ENCODE measurements at regions of chr13 and their contacts with region 1.

Region 1: GRCh38 chr13:113493315-113493951 is 2.9 kb upstream of the DCUN1D2 start:
- DNase-seq: peak; percentile 58
- H3K4me3 ChIP-seq: no peak overlapping the region
- H3K27ac ChIP-seq: no peak overlapping the region
- H3K4me1 ChIP-seq: peaks cover 18% of the 10 kb centered on the region
- H3K27me3 ChIP-seq: no peaks in the 10 kb centered on the region
- CTCF ChIP-seq: no peak

Region 2: DNA sequence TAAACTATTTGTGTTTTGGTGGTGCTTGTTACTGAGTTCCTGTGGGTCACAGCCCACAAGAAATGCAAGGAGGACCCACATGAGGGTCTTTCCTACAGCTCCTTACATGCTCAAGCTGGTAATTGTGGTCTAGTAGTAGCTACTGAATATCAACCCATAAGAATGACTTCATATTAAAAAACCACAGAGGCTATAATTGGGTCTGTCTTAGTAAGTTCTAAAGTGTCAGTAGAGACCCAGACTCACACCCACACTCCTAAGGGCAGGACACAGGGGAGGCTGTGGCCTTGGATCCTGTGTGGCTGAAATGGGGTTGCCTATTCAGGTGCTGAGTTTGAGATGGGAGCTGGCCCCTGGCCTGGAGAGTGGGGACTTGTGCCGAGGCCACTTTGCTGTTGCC is 110.8 kb after region 1 on chr13:
- CTCF ChIA-PET with region 1: no interaction called
- POLR2A ChIA-PET with region 1: interaction called, 12 read pairs
- intact Hi-C with region 1: no loop called
- DNase-seq: no peak
- H3K4me3 ChIP-seq: no peak overlapping the region
- H3K27ac ChIP-seq: no peak overlapping the region
- H3K4me1 ChIP-seq: no peaks in the 10 kb centered on the region
- H3K27me3 ChIP-seq: no peaks in the 10 kb centered on the region
- CTCF ChIP-seq: no peak